Posterior cingulate gyrus (tissue), 11 donors: ENCODE measurements at regions of chr12 and their contacts with region 1.

Region 1: GRCh38 chr12:29241821-29242591 is 92.9 kb downstream of the FAR2 start:
- DNase-seq: peak in 5 of 10 donors; percentile 34 to 88 (median 40)

Region 2: DNA sequence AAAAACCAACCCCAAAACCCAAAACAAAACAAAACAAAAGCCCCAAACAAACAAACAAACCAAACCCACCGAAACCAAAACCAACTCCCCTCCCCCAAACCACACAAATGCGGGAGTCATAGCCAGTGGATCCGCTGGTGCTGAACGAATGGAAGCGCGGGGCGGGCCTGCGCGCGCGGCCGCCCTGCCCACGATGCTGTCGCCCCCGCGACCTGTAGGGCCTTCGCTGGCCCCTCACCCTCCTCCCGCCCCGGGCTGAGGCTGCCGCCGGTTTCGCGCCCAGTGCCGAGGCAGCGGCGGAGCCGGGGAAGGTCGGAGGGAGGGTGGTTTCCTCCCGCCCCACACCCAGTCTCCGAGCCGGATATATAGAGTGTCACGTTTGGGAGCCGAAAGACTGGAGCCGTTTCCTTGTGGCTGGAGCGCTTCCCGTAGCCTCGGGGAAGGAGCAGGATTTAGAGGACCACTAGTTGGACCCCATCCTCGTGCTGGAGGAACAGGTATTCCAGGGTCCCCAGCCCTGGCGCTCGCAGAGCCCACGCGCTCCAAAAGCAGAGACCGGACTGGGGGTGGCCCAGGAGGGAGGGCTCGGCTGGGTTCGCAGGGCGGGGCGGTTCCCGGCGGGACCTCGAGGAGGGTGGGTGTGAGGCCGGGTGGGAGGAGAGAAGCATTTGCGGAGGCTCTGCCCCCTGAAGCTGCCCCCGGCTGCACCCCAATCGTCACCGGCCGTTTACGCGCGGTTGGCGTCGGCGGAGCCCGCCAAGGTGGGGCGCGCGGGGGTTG is 92.9 kb before region 1 on chr12 and contains the start of gene FAR2:
- intact Hi-C with region 1: loop called (anchors 1 kb)
- DNase-seq: peak; percentile 27 to 90 (median 42)